ENCODE measurements at regions of chr13 and their contacts with region 1.

Region 1: DNA sequence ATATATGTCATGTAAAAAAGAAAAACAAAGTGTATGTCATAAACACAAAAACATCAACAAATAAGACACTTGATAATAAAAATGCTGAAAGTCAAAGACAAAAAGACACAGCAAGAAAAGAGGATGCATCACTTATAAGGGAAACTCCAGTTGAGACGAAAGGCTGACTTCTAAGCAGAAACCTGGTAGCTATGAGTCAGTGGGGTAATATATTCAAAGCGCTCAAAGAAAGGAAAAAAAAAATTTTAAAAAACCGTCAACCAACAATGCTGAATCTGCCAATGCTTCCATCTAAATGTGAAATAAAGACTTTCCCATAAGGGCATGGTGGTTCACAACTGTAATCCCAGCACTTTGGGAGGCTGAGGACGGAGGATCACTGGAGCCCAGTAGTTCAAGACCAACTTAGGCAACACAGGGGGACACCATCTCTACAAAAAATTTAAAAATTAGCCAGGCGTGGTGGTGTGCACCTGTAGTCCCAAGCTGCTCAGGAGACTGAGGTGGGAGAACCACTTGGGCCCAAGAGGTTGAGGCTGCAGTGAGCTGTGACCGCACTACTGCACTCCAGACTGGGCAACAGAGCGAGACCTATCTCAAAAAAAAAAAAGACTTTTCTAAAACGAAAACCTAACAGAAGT is 24.0 kb downstream of the USP12 start:
- DNase-seq: peak; percentile 48
- ATAC-seq: peak; percentile 90
- H3K4me3 Mint-ChIP-seq: peak overlapping the region; percentile 81
- H3K27ac Mint-ChIP-seq: peak overlapping the region; percentile 99
- H3K4me1 Mint-ChIP-seq: peaks cover 92% of the 10 kb centered on the region
- H3K27me3 Mint-ChIP-seq: no peaks in the 10 kb centered on the region
- CTCF ChIP-seq: no peak

Region 2: DNA sequence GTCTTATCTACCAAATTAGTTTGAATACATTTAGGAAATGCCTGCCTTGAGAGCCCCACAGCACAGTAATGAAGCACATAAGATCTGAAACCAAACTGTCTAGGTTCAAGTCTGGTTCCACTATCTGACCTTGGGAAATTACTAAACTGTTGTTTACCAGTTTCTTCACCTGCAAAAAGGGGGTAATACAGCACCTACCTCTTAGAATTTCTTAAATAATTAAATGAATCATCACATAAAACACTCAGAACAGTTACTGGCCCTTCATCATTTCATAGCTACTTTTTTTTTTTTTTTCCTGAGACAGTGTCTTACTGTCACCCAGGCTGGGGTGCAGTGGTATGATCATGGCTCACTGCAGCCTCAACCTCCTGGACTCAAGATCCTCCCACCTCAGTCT is 35.6 kb before region 1 on chr13:
- CTCF ChIA-PET with region 1: no interaction called
- POLR2A ChIA-PET with region 1: no interaction called
- intact Hi-C with region 1: no loop called
- DNase-seq: no peak
- ATAC-seq: no peak
- H3K4me3 Mint-ChIP-seq: no peak overlapping the region
- H3K27ac Mint-ChIP-seq: no peak overlapping the region
- H3K4me1 Mint-ChIP-seq: peaks cover 55% of the 10 kb centered on the region
- H3K27me3 Mint-ChIP-seq: no peaks in the 10 kb centered on the region
- CTCF ChIP-seq: no peak

Region 3: GRCh38 chr13:27161980-27162379 is 14.3 kb after region 1 on chr13:
- CTCF ChIA-PET with region 1: interaction called, 3 read pairs
- POLR2A ChIA-PET with region 1: interaction called, 12 read pairs
- intact Hi-C with region 1: loop called (anchors 1 kb)
- DNase-seq: no peak
- ATAC-seq: peak; percentile 28
- H3K4me3 Mint-ChIP-seq: peak overlapping the region; percentile 33
- H3K27ac Mint-ChIP-seq: no peak overlapping the region
- H3K4me1 Mint-ChIP-seq: peaks cover 77% of the 10 kb centered on the region
- H3K27me3 Mint-ChIP-seq: no peaks in the 10 kb centered on the region
- CTCF ChIP-seq: no peak

Region 4: DNA sequence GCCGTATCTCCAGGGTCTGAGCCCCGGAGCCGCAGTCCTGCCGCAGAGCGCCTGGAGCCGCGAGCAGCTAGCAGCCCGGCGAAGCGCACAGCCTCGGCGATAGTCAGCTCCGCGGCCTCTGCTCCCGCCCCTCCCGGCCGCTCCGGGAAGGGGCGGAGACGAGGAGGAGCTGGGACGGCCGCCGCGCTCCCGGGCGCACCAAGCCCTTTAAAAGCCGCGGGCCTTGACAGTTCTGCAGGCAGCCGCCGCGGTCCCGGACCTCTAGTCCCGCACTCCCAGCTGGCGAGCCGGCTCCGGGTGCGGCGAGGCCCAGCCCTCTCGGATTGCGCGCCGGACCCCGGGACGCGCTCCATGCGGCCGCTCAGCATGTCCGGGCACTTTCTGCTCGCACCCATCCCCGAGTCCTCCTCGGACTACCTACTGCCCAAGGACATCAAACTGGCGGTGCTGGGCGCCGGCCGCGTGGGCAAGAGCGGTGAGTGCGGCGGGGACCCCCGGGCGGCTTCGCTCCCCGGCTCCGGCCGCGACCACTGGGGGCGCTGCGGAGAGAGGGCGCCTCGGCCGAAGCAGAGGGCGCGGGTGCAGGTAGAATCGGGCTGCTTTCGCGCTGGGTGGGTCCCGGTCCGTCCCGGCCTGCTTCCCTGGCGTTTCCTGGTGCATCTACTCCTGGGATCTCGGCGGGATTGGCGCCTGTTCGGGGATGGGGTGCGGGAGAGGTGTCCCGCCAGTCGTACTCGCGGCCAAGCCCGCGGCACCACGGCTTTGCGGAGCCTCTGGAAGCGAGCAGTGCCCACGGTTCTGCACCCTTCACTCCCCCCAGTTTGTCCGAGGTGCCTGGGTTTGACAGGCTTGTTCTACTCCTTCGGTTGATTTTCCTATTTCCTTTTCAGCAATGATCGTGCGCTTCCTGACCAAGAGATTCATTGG is 123.2 kb after region 1 on chr13 and contains the start of gene RASL11A:
- CTCF ChIA-PET with region 1: no interaction called
- POLR2A ChIA-PET with region 1: no interaction called
- intact Hi-C with region 1: no loop called
- DNase-seq: peak; percentile 85
- ATAC-seq: peak; percentile 91
- H3K4me3 Mint-ChIP-seq: peak within 1 kb of the TSS; percentile 90
- H3K27ac Mint-ChIP-seq: peak within 1 kb of the TSS; percentile 14
- H3K4me1 Mint-ChIP-seq: peaks cover 28% of the 10 kb centered on the region
- H3K27me3 Mint-ChIP-seq: no peaks in the 10 kb centered on the region
- CTCF ChIP-seq: peak; percentile 99
- total RNA-seq, gene RASL11A: 1.4 and 2.0 TPM in 2 replicates

Region 5: GRCh38 chr13:27321468-27322431 is 174.1 kb after region 1 on chr13:
- CTCF ChIA-PET with region 1: no interaction called
- POLR2A ChIA-PET with region 1: no interaction called
- intact Hi-C with region 1: no loop called
- DNase-seq: no peak
- ATAC-seq: no peak
- H3K4me3 Mint-ChIP-seq: no peak overlapping the region
- H3K27ac Mint-ChIP-seq: no peak overlapping the region
- H3K4me1 Mint-ChIP-seq: no peaks in the 10 kb centered on the region
- H3K27me3 Mint-ChIP-seq: peaks cover 18% of the 10 kb centered on the region
- CTCF ChIP-seq: no peak

Region 6: DNA sequence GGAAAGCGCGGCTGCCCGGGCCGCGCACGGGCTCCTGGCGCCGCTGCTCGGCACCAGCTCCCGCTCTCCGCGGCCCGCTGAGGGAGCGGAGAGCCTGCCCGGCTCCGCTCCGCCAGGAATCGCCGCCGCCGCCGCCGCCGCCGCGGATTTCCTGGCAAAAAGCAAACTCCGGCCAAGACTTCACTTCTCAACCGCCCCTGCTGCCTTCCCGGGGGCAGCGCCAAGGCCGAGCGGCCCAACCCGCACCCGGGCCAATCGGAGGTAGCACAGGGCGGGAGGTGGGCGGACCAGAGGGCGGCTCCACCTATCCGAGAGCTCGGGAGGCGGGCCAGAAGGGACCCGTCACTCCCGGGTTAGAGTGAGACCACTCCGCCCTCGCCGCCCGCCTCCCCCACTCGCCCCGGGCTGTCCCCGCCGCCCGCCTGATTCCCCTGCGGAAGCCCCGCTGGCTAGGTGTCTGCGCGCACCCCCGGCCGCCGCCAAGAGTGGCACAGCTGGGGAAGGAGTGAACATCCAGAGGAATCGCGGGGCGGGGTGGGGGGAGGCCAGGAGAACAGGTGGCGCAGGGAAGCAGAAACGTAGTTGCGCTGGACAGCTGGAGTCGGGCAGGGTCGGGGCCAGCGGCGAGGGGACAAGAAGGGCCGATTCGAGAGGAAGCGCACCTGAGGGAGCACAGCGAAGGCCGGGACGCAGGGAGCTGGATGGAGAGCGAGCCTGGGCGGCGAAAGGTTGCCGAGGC is 472.9 kb after region 1 on chr13 and contains the start of gene LNX2:
- CTCF ChIA-PET with region 1: no interaction called
- POLR2A ChIA-PET with region 1: no interaction called
- intact Hi-C with region 1: no loop called
- DNase-seq: peak; percentile 97
- ATAC-seq: peak; percentile 87
- H3K4me3 Mint-ChIP-seq: peak within 1 kb of the TSS; percentile 93
- H3K27ac Mint-ChIP-seq: peak within 1 kb of the TSS; percentile 93
- H3K4me1 Mint-ChIP-seq: peaks cover 54% of the 10 kb centered on the region
- H3K27me3 Mint-ChIP-seq: no peaks in the 10 kb centered on the region
- CTCF ChIP-seq: no peak
- total RNA-seq, gene LNX2: 6.1 and 7.1 TPM in 2 replicates